ENCODE measurements at regions of chr3 and their contacts with region 1.

Region 1: GRCh38 chr3:169668957-169669681 is 5.6 kb upstream of the MECOM start:
- DNase-seq: peak; percentile 91

Region 2: GRCh38 chr3:169218314-169218983 is 450.7 kb before region 1 on chr3:
- intact Hi-C with region 1: loop called in 1 of 2 experiments (anchors 10 kb)
- DNase-seq: no peak

Region 3: GRCh38 chr3:169686874-169687273 is 17.8 kb after region 1 on chr3:
- intact Hi-C with region 1: no loop called
- DNase-seq: no peak